ENCODE measurements at regions of chr15 and their contacts with region 1.

Region 1: DNA sequence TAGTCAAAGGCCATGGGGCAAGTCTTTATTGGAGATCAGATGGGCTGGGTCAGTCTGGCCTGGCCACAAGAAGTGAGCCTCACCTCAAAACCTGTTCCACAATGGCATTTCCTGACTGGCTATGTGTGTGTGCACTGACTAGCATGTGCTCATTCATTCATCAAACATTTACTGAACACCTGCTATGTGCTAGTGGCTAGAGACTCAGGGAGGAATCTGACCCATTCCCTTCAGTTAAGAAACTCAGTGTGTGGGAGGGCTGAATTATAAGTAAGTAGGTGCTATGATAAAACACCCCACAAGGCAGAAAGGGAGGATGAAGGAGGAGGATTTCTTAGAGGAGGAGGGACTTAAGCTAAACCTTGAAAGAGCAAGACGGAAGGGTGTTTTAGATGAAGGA is 5.4 kb upstream of the CGNL1 start:
- DNase-seq: no peak
- H3K4me3 ChIP-seq: no peak overlapping the region
- H3K27ac ChIP-seq: no peak overlapping the region
- H3K4me1 ChIP-seq: peaks cover 0 to 13% (median 10%) of the 10 kb centered on the region in 4 experiments; a peak in 5 of 7 replicates
- H3K27me3 ChIP-seq: peaks cover 0 to 5% (median 2%) of the 10 kb centered on the region in 4 experiments; a peak in 2 of 7 replicates
- CTCF ChIP-seq: no peak
- EP300 ChIP-seq: no peak
- POLR2A ChIP-seq: no peak
- RAD21 ChIP-seq: no peak

Region 2: DNA sequence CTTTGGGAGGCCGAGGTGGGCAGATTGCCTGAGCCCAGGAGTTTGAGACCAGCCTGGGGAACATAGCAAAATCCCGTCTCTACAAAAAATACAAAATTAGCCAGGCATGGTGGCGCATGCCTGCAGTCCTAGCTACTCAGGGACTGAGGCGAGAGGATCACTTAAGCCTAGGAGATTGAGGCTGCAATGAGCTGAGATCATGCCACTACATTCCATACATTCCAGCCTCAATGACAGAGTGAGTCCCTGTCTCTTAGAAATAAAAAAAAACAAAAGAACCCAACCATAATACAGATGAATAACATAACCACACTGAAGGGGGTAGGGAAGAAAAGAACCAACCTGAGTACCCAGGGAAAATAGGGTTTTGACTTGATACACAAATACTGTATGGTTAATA is 14.3 kb before region 1 on chr15:
- CTCF ChIA-PET with region 1: interaction called, 23 read pairs
- POLR2A ChIA-PET with region 1: interaction called, 11 read pairs
- DNase-seq: no peak
- H3K4me3 ChIP-seq: peak overlapping the region in 1 of 4 experiments; percentile 11; a peak in 1 of 8 replicates
- H3K27ac ChIP-seq: 0 out of 2 replicates have a peak overlapping the region, but pooled peaks have one; percentile 8
- H3K4me1 ChIP-seq: peaks cover 2 to 28% (median 13%) of the 10 kb centered on the region in 4 experiments; a peak in 5 of 7 replicates
- H3K27me3 ChIP-seq: no peaks in the 10 kb centered on the region
- CTCF ChIP-seq: no peak
- EP300 ChIP-seq: no peak
- POLR2A ChIP-seq: no peak; a peak in 1 of 3 replicates
- RAD21 ChIP-seq: no peak